ENCODE measurements at regions of chr3 and their contacts with region 1.

Region 1: GRCh38 chr3:138898301-138898700 is 48.6 kb downstream of the FOXL2 start:
- DNase-seq: no peak
- H3K4me3 ChIP-seq: no peak overlapping the region
- H3K27ac ChIP-seq: no peak overlapping the region
- H3K4me1 ChIP-seq: peaks cover 0 to 8% (median 5%) of the 10 kb centered on the region in 4 experiments
- H3K27me3 ChIP-seq: no peaks in the 10 kb centered on the region

Region 2: DNA sequence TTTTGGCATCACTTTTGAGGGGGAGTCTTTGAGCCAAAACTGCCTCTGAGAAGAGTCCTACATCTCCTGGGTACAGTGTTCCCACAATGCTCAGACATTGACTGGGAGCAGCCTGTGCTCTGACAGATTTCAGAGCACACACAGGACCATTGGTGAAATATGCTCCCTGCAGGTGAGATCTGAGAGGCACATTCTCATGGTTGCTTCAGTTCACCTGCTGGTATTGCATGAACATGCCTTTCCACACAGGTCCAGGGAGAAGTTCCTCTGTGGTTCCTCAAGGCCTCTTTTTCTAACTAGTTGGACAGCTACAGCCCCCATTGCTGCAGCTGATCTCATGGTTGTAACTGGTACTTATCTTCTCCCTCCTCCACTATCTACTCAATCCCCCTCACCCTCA is 11.6 kb after region 1 on chr3:
- CTCF ChIA-PET with region 1: interaction called, 14 read pairs
- POLR2A ChIA-PET with region 1: no interaction called
- DNase-seq: no peak
- H3K4me3 ChIP-seq: no peak overlapping the region
- H3K27ac ChIP-seq: no peak overlapping the region
- H3K4me1 ChIP-seq: peaks cover 0 to 3% (median 2%) of the 10 kb centered on the region in 4 experiments
- H3K27me3 ChIP-seq: no peaks in the 10 kb centered on the region

Region 3: GRCh38 chr3:138960417-138960852 is 62.1 kb after region 1 on chr3:
- CTCF ChIA-PET with region 1: no interaction called
- POLR2A ChIA-PET with region 1: no interaction called
- DNase-seq: peak in 1 of 3 donors; percentile 18
- H3K4me3 ChIP-seq: peak overlapping the region in 6 of 7 experiments; percentile 7 to 68 (median 53)
- H3K27ac ChIP-seq: no peak overlapping the region
- H3K4me1 ChIP-seq: peaks cover 0 to 12% (median 9%) of the 10 kb centered on the region in 4 experiments
- H3K27me3 ChIP-seq: peaks cover 0 to 43% (median 12%) of the 10 kb centered on the region in 5 experiments

Measured in common myeloid progenitor, CD34-positive (primary cell).